ENCODE measurements at regions of chr18 and their contacts with region 1.

Region 1: DNA sequence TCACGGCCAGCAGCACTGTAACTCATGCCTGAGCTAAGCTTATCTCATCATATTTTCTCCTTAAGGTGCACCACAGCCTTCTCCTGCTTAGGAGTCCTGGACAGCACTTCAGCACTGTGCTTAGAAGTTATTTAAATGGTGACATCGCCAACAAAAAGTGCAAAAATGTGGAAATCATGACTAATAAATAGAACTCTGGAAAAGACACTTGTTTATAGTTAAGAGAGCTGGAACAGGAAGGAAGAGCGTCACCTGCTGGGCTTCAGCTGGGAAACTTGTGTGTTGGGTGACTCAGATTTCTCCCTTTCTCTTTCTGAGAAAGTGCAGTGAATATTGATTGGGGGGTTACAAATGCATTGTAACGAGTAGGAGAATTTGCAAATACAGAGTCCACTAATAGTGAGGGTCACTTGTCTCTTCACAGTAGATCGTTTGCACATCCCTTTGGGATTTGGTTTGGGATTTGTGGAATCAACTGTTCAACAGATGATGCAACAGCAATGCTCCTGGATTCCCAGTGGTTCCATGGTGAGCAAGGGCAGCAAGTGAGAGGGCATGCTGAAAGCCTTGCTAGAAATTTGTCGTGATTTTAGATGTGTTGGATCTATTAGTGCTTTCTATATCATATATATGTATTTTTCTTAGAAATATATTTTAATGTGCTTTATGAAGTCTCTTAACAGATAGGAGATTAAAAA is 84.2 kb downstream of the DOK6 start:
- DNase-seq: no peak
- ATAC-seq: no peak
- H3K4me3 ChIP-seq: no peak overlapping the region
- H3K27ac ChIP-seq: no peak overlapping the region
- H3K4me1 ChIP-seq: peaks cover 1% of the 10 kb centered on the region
- H3K27me3 ChIP-seq: no peaks in the 10 kb centered on the region

Region 2: GRCh38 chr18:69935319-69936190 is 450.7 kb after region 1 on chr18:
- intact Hi-C with region 1: no loop called
- DNase-seq: peak in 1 of 3 donors; percentile 55
- ATAC-seq: peak in 1 of 2 donors; percentile 41
- H3K4me3 ChIP-seq: no peak overlapping the region
- H3K27ac ChIP-seq: no peak overlapping the region
- H3K4me1 ChIP-seq: no peaks in the 10 kb centered on the region
- H3K27me3 ChIP-seq: no peaks in the 10 kb centered on the region

Region 3: DNA sequence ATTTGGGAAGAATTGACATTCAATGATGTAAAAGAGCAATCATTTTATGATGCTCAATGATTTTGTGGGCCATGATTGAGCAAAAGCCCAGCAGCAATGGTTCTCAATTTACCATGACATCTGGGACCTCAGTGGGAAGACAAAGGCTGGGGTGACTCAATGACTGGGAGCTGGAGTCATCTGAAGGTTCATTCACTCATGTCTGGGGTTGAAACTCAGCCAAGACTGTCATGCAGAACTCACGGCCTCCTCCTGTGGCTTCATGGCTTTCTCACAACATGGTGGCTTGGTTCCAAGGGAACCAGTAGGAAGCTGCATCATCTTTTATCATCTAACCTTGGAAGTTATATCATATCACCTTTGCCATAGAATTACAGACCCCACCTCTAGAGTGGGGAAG is 507.9 kb after region 1 on chr18:
- intact Hi-C with region 1: loop called in 1 of 4 experiments (anchors 10 kb)
- DNase-seq: no peak
- ATAC-seq: no peak
- H3K4me3 ChIP-seq: no peak overlapping the region
- H3K27ac ChIP-seq: no peak overlapping the region
- H3K4me1 ChIP-seq: no peaks in the 10 kb centered on the region
- H3K27me3 ChIP-seq: no peaks in the 10 kb centered on the region

Measured in right cardiac atrium (tissue), 5 donors.